ENCODE measurements at regions of chr1 and their contacts with region 1.

Region 1: DNA sequence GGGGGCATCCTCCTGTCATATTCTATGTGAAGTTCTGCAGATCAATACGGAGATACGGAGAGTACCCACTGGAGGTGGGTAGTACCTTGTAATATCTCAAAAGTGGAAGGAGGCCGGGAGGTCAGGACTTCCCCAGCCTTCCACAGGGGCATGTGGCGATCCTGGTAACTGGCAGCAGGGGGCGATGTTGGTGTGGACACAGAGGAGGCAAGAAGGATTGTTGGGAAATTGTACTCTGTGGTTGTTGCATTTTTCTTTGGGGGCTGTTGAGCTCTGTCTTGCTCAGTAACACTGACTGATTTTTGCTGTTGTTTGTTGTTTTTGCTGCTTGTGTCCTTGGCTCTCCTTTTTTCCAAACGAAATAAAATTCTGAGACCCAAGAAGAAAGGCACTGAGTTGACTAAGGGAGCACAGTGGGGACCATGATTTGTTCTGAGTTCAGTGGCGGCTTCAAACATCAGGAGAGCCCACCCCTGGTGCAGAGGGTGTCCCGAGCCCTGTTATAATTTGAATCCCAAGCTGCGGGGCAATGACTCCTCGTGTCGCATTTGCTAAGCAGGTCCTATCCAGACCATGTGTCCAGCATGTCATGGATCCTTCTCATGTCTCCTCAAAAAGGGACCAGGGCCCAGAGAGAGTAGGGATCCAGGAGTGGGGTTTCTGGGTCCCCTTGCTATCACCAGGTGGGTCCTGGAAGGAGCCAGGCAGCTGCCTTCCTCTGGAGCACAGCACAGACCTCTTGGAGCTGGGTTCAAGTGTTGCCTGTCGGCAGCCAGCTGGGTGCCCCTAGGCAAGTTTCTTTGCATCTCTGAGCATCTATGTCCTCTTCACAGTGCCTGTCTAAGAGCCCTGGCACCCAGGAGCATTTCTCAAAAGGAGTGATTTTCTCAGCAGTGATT is 22.8 kb downstream of the LHX4 start:
- DNase-seq: peak; percentile 72
- ATAC-seq: peak; percentile 74
- H3K4me3 ChIP-seq: no peak overlapping the region
- H3K27ac ChIP-seq: no peak overlapping the region
- H3K4me1 ChIP-seq: peaks cover 2% of the 10 kb centered on the region; the same call in 1 of the 2 replicates
- H3K27me3 ChIP-seq: no peaks in the 10 kb centered on the region
- CTCF ChIP-seq: peak; percentile 89

Region 2: DNA sequence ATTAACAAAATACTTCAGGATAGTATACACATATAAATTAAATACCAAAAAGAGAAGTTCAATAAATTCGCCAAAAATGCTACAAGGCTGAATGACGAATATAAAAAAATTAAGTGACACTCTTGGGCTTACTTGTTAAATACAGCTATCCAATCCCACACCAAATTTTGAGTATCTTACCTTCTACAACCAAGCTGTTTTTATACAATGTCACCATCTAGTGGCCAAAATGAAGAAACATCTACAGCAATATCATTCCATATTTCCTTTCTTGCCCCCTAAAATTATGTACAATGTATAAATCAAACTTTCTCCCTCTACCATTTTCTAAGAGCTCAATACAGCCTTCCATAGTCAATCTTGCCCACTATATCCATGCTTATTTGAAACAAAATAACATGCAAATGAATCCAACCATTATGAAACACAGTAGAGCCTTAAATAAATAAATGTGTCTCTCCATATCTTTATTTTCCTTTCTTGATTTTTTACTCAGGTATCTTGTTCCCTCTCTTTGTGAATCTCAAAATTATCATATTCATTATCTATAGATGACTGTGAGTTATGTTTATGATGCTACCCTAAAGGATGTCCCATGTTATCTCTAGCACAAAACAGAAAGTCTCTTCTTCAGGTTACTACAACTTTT is 163.2 kb after region 1 on chr1:
- CTCF ChIA-PET with region 1: interaction called, 3 read pairs
- POLR2A ChIA-PET with region 1: no interaction called
- intact Hi-C with region 1: loop called (anchors 1 kb)
- DNase-seq: peak; percentile 53
- ATAC-seq: peak; percentile 51; the same call in 1 of the 2 replicates
- H3K4me3 ChIP-seq: no peak overlapping the region
- H3K27ac ChIP-seq: no peak overlapping the region
- H3K4me1 ChIP-seq: no peaks in the 10 kb centered on the region
- H3K27me3 ChIP-seq: no peaks in the 10 kb centered on the region
- CTCF ChIP-seq: peak; percentile 75

Region 3: DNA sequence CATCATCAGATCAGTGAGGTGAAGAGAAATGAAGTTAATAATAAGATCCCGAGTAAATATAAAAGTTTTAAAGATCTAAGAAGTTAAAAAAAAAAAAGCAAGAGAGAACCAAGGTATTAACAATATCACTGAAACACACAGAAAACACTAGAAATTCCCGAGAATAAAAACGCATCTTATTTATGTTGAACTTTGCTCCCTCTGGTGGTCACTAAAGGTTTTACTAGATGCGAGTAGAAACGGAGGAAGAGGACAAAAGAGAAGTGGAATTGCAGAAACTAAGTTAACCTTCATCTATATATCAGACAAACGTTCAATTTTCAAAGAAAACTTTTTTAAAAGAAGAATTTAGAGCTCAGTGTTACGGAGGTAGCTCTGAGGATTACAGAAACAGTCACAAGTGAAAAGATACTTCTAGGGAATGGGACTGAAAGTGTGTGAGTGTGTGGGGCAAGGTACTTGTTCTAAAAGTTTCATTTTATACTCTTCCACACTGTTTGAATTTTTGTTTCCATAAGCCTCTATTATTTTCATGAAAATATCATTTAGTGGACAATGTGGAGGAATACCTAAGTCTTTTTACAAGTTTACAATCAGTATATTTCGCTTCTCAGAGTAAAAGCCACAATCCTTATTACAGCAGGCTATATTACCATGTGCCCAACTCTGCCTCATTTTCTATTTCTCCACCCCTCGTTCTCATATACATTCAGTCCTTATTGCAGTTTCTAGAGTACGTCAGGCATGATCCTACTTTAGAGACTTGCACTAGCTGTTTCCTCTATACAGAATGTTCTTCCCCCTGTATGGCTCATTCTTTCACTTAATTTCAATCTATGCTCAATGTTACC is 229.8 kb after region 1 on chr1:
- CTCF ChIA-PET with region 1: no interaction called
- POLR2A ChIA-PET with region 1: no interaction called
- intact Hi-C with region 1: loop called (anchors 2 kb)
- DNase-seq: peak; percentile 59
- ATAC-seq: peak; percentile 55
- H3K4me3 ChIP-seq: no peak overlapping the region; the same call in 1 of the 2 replicates
- H3K27ac ChIP-seq: no peak overlapping the region
- H3K4me1 ChIP-seq: peaks cover 2% of the 10 kb centered on the region; the same call in 1 of the 2 replicates
- H3K27me3 ChIP-seq: no peaks in the 10 kb centered on the region
- CTCF ChIP-seq: peak; percentile 74

Region 4: DNA sequence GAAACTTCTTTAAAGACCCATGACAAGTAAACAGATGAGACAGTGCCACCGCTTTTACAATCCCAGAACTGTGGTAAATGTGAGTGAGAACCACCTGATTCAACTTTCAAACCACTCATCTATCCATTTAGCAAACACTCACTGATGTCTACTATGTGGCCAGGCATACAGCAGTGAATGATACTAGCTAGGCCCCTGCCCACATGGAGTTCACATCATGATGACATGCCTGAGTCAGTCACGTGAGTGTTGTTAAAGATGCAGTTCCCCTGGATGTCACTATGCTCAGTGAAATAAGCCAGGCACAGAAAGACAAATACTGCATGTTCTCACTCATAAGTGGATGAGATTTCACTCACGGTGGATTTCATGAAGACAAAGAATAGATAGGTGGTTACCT is 741.4 kb after region 1 on chr1:
- CTCF ChIA-PET with region 1: no interaction called
- POLR2A ChIA-PET with region 1: no interaction called
- intact Hi-C with region 1: no loop called
- DNase-seq: no peak
- ATAC-seq: no peak
- H3K4me3 ChIP-seq: no peak overlapping the region
- H3K27ac ChIP-seq: no peak overlapping the region
- H3K4me1 ChIP-seq: no peaks in the 10 kb centered on the region
- H3K27me3 ChIP-seq: no peaks in the 10 kb centered on the region
- CTCF ChIP-seq: no peak

Measured in PC-3 (cell line).